ENCODE measurements at regions of chr12 and their contacts with region 1.

Region 1: DNA sequence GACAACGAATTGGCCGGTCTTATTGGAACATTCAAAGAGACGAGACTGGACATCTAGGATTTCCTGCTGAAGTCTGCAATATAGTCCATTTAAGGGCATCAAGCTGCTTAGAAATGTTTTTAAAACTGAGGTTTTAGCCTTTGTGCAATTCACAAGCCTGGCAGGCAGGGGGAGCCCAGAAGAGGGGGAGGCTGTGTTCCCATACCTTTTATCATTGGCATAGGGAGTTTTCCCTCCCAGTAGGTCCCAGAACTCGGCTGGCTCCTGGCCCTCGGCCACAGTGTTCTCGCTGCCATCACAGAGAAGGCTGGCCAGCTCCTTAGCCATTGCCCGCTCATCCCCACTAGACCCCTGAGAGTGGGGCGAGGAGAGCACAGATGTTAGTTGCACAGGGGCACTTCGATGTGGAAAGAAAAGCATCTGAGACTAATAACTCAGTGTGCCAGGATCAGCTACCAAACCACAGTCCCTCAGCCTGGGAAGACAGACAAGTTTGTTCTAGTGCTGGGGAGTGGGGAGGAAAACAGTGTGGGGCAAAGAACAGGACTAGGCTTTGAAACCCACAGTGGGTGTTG is 15.1 kb downstream of the AVIL start:
- DNase-seq: no peak
- H3K4me3 ChIP-seq: no peak overlapping the region
- CTCF ChIP-seq: peak; percentile 83

Region 2: DNA sequence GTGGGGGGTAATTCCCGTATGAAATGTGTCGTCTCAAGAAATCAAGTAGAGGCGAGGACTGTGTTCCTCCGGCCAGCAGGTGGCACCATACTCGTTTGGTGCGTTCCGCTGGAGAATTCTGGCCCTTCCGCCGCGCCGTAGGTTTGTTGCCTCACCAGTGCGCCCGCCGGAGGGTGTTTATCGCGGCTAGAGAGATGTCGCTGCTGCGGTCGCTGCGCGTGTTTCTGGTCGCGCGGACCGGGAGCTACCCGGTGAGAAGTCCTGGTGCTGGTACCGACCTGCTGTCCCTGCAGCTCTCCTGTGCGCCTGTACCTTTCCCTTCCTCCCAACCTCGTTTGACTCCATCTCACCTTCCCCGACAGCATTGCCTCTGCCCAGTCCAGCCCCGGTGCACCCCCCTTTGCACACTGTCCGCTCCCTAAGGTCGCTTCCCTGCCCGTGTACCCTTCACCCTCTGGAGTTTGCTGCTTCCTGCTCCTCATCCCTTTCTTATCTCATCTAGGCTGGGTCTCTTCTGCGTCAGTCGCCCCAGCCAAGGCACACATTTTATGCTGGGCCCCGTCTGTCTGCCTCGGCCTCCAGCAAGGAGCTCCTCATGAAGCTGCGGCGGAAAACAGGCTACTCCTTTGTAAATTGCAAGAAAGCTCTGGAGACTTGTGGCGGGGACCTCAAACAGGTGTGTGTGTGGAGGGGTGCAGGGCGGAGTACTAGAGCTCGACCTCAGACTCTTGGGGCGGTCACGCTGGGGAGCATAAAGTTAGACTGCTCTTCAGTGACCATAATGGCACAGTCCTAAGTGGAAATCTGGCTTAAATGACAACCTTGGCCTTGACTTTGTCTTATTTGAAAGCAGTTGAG is 20.6 kb before region 1 on chr12 and contains the start of gene TSFM:
- CTCF ChIA-PET with region 1: interaction called, 199 read pairs
- POLR2A ChIA-PET with region 1: no interaction called
- DNase-seq: peak; percentile 69
- H3K4me3 ChIP-seq: peak within 1 kb of the TSS; percentile 94
- CTCF ChIP-seq: peak; percentile 95

Region 3: DNA sequence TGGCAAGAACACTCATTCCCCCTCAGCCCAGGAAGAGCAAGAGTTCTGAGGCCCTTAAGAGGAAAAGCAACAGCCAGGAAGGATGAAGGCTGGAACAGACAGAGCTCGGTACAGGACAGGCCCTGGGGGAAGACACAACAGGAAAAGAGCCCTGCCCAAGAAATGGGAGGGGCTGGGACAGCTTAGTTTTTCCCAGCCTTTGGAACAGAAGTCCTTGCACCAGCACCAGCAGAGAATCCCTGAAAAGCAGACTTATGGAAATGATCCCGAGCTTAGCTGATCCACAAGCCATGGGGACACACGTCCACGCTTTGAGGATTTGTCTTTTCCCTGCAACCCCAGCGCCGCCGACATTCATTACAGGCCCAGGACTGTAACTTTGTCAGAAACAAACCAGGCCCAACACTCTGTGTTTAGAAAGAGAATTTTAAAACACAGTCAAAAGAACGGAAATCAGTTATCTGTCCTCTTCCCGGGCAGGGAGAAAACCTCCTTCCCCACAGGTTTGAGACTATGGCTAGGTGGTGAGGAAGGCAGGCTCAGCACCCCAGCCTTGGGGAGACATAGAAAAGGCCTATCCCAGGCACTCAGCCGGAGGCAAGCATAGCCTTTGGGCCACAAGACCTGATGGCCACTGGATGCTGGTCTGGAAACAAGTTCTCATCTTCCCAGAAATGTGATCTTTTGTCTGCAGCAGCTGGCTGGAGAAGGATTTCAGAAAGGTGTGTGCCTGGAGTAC is 19.2 kb after region 1 on chr12:
- CTCF ChIA-PET with region 1: interaction called, 163 read pairs
- POLR2A ChIA-PET with region 1: interaction called, 3 read pairs
- DNase-seq: no peak
- H3K4me3 ChIP-seq: no peak overlapping the region
- CTCF ChIP-seq: no peak

Region 4: DNA sequence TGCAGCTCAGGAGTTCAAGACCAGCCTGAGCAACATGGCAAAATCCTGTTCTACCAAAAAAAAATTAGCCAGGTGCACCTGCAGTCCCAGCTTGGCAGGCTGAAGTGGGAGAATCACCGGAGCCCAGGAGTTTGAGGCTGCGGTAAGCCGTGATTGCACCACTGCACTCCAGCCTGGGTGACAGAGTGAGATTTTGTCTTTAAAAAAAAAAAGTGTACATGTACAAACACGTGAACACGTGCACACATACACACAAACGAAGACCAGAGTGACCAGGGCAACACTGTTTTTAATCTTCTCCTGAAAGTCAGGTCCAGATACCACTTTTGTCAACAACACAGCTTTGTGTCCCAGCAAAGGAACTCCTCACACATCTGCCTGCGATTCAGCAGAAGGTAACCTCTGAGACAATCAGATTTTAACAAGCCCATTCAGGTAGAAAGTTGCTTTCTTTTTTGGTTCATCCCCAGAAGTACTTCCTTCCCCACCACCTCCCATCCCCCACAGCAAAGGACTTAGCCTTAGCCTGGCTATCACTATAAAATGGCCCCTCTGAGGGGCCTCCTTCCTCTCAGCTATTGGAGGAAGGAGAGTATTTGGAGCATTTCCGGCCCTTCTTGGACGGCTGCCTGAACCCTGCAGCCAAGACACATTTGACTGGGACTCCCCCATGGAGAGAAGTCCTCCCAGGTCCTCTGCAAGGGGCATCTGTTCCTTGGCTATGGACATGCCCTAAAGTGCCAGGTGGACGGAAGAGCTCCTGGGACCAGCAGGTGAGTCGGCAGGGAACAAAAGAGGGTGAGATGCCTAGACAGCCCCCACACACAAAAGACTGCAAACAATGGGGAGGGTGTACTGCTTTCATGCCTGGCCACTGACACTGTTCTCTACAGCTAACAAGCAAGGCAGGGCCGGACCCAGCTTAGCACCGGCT is 33.3 kb after region 1 on chr12:
- CTCF ChIA-PET with region 1: interaction called, 12 read pairs
- POLR2A ChIA-PET with region 1: no interaction called
- DNase-seq: peak; percentile 60
- H3K4me3 ChIP-seq: peak overlapping the region; percentile 40
- CTCF ChIP-seq: no peak

Region 5: GRCh38 chr12:57899010-57899662 is 95.7 kb after region 1 on chr12:
- CTCF ChIA-PET with region 1: interaction called, 478 read pairs
- POLR2A ChIA-PET with region 1: no interaction called
- DNase-seq: no peak
- H3K4me3 ChIP-seq: no peak overlapping the region
- CTCF ChIP-seq: no peak